Activated CD4-positive, alpha-beta T cell treated with anti-CD3 and anti-CD28 coated beads for 36 hours (primary cell): ENCODE measurements at regions of chr17 and their contacts with region 1.

Region 1: GRCh38 chr17:17591355-17592298 is at the start of gene PEMT:
- DNase-seq: peak; percentile 96
- ATAC-seq: peak; percentile 96
- H3K4me3 Mint-ChIP-seq: peak within 1 kb of the TSS; percentile 92
- H3K27ac Mint-ChIP-seq: peak within 1 kb of the TSS; percentile 95
- H3K4me1 Mint-ChIP-seq: peaks cover 16% of the 10 kb centered on the region
- H3K27me3 Mint-ChIP-seq: no peaks in the 10 kb centered on the region
- total RNA-seq, gene PEMT: 30.4 to 32.3 TPM

Region 2: DNA sequence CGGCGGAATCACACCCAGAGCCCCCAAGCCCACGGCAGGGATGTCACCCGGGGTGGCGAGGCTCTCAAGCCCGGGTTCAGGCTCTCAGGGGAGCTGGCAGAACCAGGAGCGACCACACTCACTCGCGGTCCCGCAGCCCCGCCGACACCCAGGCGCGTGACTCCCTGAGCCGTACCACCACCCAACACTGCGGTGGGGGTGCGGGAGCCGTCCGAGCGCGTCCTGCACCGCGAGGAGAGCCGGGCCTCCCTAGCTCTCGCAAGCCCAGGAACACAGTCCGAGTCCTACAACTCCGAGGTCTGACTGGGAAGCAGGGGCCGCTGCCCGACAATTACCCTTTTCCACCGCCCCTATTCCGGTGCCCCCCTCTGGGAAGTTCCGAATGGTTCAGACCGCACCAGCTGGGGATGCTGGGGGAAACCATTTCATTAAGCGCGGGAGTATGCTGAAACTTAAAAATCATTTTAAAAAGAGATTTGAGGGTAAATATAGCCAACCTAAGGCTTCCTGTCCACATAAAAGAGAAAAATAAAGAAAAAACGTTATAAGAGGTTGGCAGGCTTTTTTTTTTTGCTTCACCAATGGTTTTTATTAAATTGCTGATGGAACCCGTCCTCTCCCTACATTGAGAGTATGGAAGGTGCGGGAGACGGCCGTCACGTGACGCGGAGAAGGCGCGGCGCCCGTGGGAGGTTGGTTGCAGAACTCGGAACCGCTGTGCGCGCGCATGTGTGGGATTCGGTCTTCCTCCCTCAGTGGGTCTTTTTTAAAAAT is 354.4 kb before region 1 on chr17 and contains the start of gene FLCN:
- CTCF ChIA-PET with region 1: no interaction called
- POLR2A ChIA-PET with region 1: no interaction called
- intact Hi-C with region 1: loop called in 1 of 2 experiments (anchors 1 kb)
- DNase-seq: peak; percentile 93
- ATAC-seq: peak; percentile 90
- H3K4me3 Mint-ChIP-seq: peak within 1 kb of the TSS; percentile 81
- H3K27ac Mint-ChIP-seq: peak within 1 kb of the TSS; percentile 98
- H3K4me1 Mint-ChIP-seq: peaks cover 31% of the 10 kb centered on the region
- H3K27me3 Mint-ChIP-seq: no peaks in the 10 kb centered on the region
- total RNA-seq, gene FLCN: 12.3 to 18.8 TPM

Region 3: DNA sequence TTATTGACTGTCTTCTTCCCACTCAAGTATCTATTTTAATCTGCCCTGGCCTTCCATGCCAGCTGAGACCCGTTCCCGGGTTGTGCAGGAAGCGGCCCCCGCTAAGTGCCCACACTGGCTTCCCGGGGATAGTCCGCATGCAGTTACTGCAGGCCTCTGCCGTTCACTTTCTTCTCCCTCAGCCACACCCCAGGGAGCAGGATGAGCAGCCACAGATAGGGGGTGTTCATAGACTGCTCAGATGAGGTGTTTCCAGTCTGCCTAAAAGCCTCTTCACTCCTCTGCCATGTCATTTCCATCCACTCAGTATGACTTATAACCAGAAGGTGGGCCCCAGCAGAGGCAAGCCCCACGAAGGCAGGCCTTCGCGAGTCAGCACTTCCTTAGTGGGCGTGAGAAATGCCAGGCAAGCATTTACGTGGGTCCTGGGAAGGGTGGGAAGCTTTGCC is 107.2 kb before region 1 on chr17:
- CTCF ChIA-PET with region 1: no interaction called
- POLR2A ChIA-PET with region 1: no interaction called
- intact Hi-C with region 1: loop called in 1 of 2 experiments (anchors 2 kb)
- DNase-seq: peak; percentile 84
- ATAC-seq: peak; percentile 100
- H3K4me3 Mint-ChIP-seq: no peak overlapping the region
- H3K27ac Mint-ChIP-seq: peak overlapping the region; percentile 68
- H3K4me1 Mint-ChIP-seq: peaks cover 64% of the 10 kb centered on the region
- H3K27me3 Mint-ChIP-seq: no peaks in the 10 kb centered on the region

Region 4: DNA sequence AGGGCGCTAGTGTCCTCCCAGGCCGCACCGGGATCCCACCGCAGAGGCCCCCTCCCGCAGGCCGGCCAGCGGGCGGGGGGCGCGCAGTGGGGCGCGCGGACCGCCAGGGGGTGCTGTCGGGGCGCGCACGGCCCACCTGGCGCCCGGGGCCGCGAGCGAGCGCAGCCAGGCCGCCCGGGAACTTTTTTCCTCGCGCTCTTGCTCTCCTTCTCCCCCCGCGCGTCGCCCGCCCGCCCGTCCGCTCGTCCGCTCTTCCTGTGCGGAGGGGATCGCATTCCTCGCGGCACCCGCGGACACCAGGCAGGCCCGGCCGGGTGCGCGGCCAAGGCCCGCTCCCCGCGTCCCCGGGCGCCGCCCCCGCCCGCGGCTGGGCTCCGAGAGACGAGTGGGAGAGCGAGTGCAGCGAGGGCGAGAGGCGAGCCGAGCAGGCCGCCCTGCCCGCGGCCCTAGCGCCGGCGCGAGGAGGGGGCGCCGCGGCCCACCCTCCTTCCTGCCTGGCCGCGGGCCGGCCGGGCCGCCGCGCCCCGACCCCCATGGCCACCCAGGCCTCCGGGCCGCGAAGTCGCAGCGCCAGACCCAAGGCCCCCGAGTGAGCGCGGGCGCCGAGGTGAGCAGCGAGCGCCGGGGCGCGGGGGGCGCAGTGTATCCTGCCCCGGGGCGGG is 89.7 kb after region 1 on chr17 and contains the start of gene RAI1:
- CTCF ChIA-PET with region 1: interaction called, 3 read pairs
- POLR2A ChIA-PET with region 1: no interaction called
- intact Hi-C with region 1: loop called in 1 of 2 experiments (anchors 1 kb)
- DNase-seq: peak; percentile 84
- ATAC-seq: peak; percentile 63
- H3K4me3 Mint-ChIP-seq: peak within 1 kb of the TSS; percentile 86
- H3K27ac Mint-ChIP-seq: peak within 1 kb of the TSS; percentile 86
- H3K4me1 Mint-ChIP-seq: peaks cover 27% of the 10 kb centered on the region
- H3K27me3 Mint-ChIP-seq: no peaks in the 10 kb centered on the region
- total RNA-seq, gene RAI1: 13.6 to 16.4 TPM

Region 5: DNA sequence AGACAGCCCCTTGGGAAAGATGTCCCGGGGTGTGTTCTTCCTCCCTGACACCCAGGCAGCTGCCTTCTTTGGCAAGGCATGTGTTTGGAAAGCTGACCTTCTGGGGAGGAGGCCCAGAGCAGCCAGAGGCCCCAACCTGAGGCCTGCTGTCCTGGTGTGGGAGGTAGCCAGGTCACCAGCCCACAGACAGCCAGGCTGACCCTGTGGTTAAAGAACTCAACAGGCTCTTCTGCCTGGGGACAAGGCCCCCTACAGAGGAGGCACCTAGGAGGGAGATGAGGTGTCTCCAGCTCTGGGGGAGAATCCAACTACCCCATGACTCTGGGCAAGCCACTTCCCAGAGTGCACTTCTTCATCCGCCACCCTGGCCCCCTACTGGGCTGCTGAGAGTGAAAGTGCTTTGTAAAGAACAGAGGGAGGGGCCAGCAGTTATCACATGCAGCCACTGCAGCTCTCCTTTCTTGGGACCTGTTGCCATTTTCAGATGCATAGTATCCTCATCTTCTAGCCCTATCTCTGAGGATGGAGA is 258.3 kb after region 1 on chr17:
- CTCF ChIA-PET with region 1: no interaction called
- POLR2A ChIA-PET with region 1: no interaction called
- intact Hi-C with region 1: loop called in 1 of 2 experiments (anchors 5 kb)
- DNase-seq: peak; percentile 90
- ATAC-seq: peak; percentile 64
- H3K4me3 Mint-ChIP-seq: peak overlapping the region; percentile 34
- H3K27ac Mint-ChIP-seq: peak overlapping the region; percentile 95
- H3K4me1 Mint-ChIP-seq: peaks cover 72% of the 10 kb centered on the region
- H3K27me3 Mint-ChIP-seq: no peaks in the 10 kb centered on the region